Psoas muscle (tissue), 8 donors: ENCODE measurements at regions of chr5 and their contacts with region 1.

Region 1: GRCh38 chr5:81297531-81297930 is 3.9 kb upstream of the ZCCHC9 start:
- DNase-seq: no peak
- ATAC-seq: no peak
- H3K4me3 ChIP-seq: no peak overlapping the region
- H3K27ac ChIP-seq: no peak overlapping the region
- H3K4me1 ChIP-seq: peaks cover 12% of the 10 kb centered on the region
- H3K27me3 ChIP-seq: no peaks in the 10 kb centered on the region
- CTCF ChIP-seq: no peak

Region 2: GRCh38 chr5:80672140-80672736 is 625.3 kb before region 1 on chr5:
- intact Hi-C with region 1: loop called in 1 of 2 experiments (anchors 5 kb)
- DNase-seq: peak; percentile 53 to 66
- ATAC-seq: peak in 3 of 4 donors; percentile 61 to 80 (median 70)
- H3K4me3 ChIP-seq: no peak overlapping the region
- H3K27ac ChIP-seq: no peak overlapping the region
- H3K4me1 ChIP-seq: no peaks in the 10 kb centered on the region
- H3K27me3 ChIP-seq: no peaks in the 10 kb centered on the region
- CTCF ChIP-seq: peak; percentile 71

Region 3: GRCh38 chr5:81194633-81195333 is 102.7 kb before region 1 on chr5:
- intact Hi-C with region 1: loop called in 1 of 2 experiments (anchors 5 kb)
- DNase-seq: peak; percentile 87 to 90
- ATAC-seq: peak; percentile 89 to 98 (median 96)
- H3K4me3 ChIP-seq: peak overlapping the region; percentile 16
- H3K27ac ChIP-seq: no peak overlapping the region
- H3K4me1 ChIP-seq: peaks cover 14% of the 10 kb centered on the region
- H3K27me3 ChIP-seq: no peaks in the 10 kb centered on the region
- CTCF ChIP-seq: peak; percentile 87

Region 4: GRCh38 chr5:81235287-81236072 is 62.1 kb before region 1 on chr5:
- intact Hi-C with region 1: loop called in 1 of 2 experiments (anchors 5 kb)
- DNase-seq: peak; percentile 36 to 72
- ATAC-seq: peak; percentile 27 to 48 (median 38)
- H3K4me3 ChIP-seq: peak overlapping the region; percentile 78
- H3K27ac ChIP-seq: peak overlapping the region; percentile 98
- H3K4me1 ChIP-seq: peaks cover 65% of the 10 kb centered on the region
- H3K27me3 ChIP-seq: no peaks in the 10 kb centered on the region
- CTCF ChIP-seq: no peak

Region 5: DNA sequence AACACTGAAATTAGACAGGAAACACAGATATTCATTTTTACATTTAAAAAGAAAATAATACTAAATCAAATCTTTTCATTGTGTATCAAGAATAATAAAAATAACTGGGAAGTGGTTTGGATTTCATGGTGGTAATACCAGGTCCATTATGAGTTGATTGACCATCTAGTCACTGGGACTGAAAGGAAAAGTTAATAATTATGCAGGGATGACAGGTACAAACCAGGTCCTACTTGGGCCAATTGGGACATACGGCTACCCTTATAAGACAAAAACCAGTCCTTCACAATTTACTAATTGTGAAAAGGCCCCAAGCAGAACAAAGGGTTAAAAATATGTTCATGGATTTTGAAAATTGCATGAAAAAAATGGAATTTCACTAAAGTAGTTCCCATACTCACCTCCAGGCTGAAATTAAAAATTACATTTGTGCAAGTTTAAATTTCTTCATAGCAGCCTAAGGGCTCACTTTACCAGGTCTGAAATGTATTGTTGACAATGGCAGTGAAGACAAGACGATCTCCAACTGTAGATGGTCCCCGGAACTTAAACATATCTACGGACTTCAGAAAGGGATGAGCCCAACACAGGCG is 48.0 kb after region 1 on chr5:
- intact Hi-C with region 1: no loop called
- DNase-seq: no peak
- ATAC-seq: no peak
- H3K4me3 ChIP-seq: no peak overlapping the region
- H3K27ac ChIP-seq: no peak overlapping the region
- H3K4me1 ChIP-seq: no peaks in the 10 kb centered on the region
- H3K27me3 ChIP-seq: no peaks in the 10 kb centered on the region
- CTCF ChIP-seq: no peak

Region 6: GRCh38 chr5:81631124-81631523 is 333.6 kb after region 1 on chr5:
- intact Hi-C with region 1: no loop called
- DNase-seq: no peak
- ATAC-seq: no peak
- H3K4me3 ChIP-seq: no peak overlapping the region
- H3K27ac ChIP-seq: no peak overlapping the region
- H3K4me1 ChIP-seq: peaks cover 4% of the 10 kb centered on the region
- H3K27me3 ChIP-seq: no peaks in the 10 kb centered on the region
- CTCF ChIP-seq: no peak